ENCODE measurements at regions of chr20 and their contacts with region 1.

Region 1: DNA sequence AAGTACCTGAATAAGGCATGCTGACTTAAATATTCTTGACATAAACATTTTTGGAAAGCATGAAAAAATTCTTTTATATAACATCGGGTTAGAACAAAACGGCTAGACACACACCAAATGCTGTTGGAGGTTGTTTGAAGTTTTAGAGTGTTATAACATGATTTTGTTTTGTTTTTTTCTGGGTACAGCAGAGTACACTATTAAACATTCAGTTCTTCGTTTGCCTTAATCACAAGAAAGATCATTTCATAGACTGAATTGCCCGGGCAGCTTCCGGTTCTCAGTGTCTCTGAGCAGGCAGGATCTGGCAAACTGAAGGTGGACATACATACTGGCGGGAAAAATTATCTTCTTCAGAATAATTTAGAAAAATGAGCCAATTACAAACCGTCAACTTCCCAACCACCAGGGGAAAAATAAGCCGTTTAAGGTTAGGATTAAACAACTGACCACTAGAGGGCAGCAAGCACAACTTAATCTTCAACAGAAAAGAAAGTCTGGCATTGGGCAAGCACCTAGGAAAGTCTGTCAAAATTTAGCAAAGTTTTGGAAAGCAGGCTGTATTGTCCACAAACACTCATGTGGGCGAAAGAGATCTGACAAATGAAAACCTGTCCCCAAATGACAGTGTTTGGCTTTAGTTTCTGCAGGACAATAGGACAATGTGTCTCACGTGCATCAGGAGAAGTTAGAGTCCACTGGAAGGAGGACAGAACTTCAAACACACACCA is 15.0 kb downstream of the ZNF217 start:
- DNase-seq: peak; percentile 78 to 81
- H3K4me3 ChIP-seq: peak overlapping the region; percentile 20
- H3K4me1 ChIP-seq: peaks cover 41% of the 10 kb centered on the region
- H3K27me3 ChIP-seq: no peaks in the 10 kb centered on the region

Region 2: GRCh38 chr20:53750827-53751619 is 172.4 kb after region 1 on chr20:
- in situ Hi-C with region 1: loop called (anchors 10 kb)
- DNase-seq: peak in 1 of 2 experiments; percentile 44
- H3K4me3 ChIP-seq: no peak overlapping the region
- H3K4me1 ChIP-seq: peaks cover 41% of the 10 kb centered on the region
- H3K27me3 ChIP-seq: no peaks in the 10 kb centered on the region

Region 3: GRCh38 chr20:53939572-53940359 is 361.1 kb after region 1 on chr20:
- in situ Hi-C with region 1: loop called (anchors 5 kb)
- DNase-seq: peak; percentile 88 to 93
- H3K4me3 ChIP-seq: no peak overlapping the region
- H3K4me1 ChIP-seq: peaks cover 24% of the 10 kb centered on the region
- H3K27me3 ChIP-seq: no peaks in the 10 kb centered on the region

Measured in HAP-1 (cell line).